Activated CD4-positive, alpha-beta T cell treated with anti-CD3 and anti-CD28 coated beads for 36 hours (primary cell): ENCODE measurements at regions of chr6 and their contacts with region 1.

Region 1: GRCh38 chr6:106461084-106461483 is 100.6 kb downstream of the CRYBG1 start:
- DNase-seq: no peak
- ATAC-seq: no peak
- H3K4me3 Mint-ChIP-seq: no peak overlapping the region
- H3K27ac Mint-ChIP-seq: no peak overlapping the region
- H3K4me1 Mint-ChIP-seq: no peaks in the 10 kb centered on the region
- H3K27me3 Mint-ChIP-seq: peaks cover 4% of the 10 kb centered on the region

Region 2: GRCh38 chr6:106477790-106478189 is 16.7 kb after region 1 on chr6:
- CTCF ChIA-PET with region 1: interaction called, 18 read pairs
- POLR2A ChIA-PET with region 1: no interaction called
- intact Hi-C with region 1: no loop called
- DNase-seq: no peak
- ATAC-seq: no peak
- H3K4me3 Mint-ChIP-seq: no peak overlapping the region
- H3K27ac Mint-ChIP-seq: no peak overlapping the region
- H3K4me1 Mint-ChIP-seq: peaks cover 9% of the 10 kb centered on the region
- H3K27me3 Mint-ChIP-seq: no peaks in the 10 kb centered on the region